ENCODE measurements at regions of chr4 and their contacts with region 1.

Region 1: GRCh38 chr4:7192252-7193029 is at the start of gene SORCS2:
- DNase-seq: peak in 11 of 14 experiments; percentile 8 to 66 (median 34)
- ATAC-seq: peak; percentile 43
- H3K4me3 ChIP-seq: no peak within 1 kb of the TSS
- H3K4me3 Mint-ChIP-seq: peak within 1 kb of the TSS; percentile 62
- H3K27ac ChIP-seq: no peak within 1 kb of the TSS
- H3K27ac Mint-ChIP-seq: no peak within 1 kb of the TSS
- H3K4me1 ChIP-seq: peaks cover 8% of the 10 kb centered on the region
- H3K4me1 Mint-ChIP-seq: no peaks in the 10 kb centered on the region
- H3K27me3 ChIP-seq: peaks cover 32 to 62% of the 10 kb centered on the region in 2 experiments
- H3K27me3 Mint-ChIP-seq: peaks cover 78% of the 10 kb centered on the region
- CTCF ChIP-seq: no peak
- total RNA-seq, gene SORCS2: not detected

Region 2: DNA sequence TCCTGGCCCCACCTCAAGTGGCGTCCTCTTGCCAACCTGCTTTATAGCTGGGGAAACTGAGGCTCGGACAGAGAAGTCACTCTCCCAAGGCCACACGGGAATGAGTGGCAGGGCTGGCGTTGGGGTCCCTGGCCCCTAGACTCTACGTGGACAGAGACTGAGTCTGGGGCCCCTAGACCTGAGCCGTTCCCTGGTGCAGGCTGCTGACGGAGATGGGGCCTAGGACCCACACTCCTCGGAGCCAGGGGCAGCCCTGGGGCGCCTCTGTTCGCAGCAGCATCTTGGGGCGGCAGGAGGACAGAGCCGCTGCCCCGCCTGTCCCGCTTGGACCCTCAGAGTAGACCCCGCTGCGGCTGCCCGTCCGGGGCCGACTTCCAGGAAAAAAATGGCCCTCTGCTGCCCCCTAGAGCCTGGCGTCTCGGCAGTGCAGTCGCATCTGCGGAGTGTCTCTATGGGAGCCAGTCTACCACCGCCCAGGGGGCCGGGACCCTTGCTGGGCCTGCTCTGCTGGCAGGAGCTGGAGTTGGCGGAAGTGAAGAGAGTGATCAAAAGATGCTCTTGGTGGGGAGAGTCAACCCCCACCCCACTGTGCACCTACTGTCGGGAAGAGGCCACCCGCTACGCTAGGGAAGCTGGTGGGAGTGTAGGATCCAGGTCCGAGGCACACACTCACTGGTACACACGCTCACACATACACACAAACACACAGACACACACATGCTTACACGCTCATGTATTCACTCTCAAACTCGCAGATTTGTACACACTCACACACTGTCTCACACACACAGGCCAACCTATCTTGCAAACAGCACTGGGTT is 527.1 kb after region 1 on chr4:
- CTCF ChIA-PET with region 1: no interaction called
- POLR2A ChIA-PET with region 1: no interaction called
- intact Hi-C with region 1: loop called in 1 of 2 experiments (anchors 5 kb)
- DNase-seq: peak; percentile 26 to 73 (median 52)
- ATAC-seq: peak; percentile 51
- H3K4me3 ChIP-seq: no peak overlapping the region
- H3K4me3 Mint-ChIP-seq: no peak overlapping the region
- H3K27ac ChIP-seq: no peak overlapping the region
- H3K27ac Mint-ChIP-seq: no peak overlapping the region
- H3K4me1 ChIP-seq: peaks cover 6% of the 10 kb centered on the region
- H3K4me1 Mint-ChIP-seq: peaks cover 3% of the 10 kb centered on the region
- H3K27me3 ChIP-seq: peaks cover 5 to 11% of the 10 kb centered on the region in 2 experiments
- H3K27me3 Mint-ChIP-seq: peaks cover 27% of the 10 kb centered on the region
- CTCF ChIP-seq: peak; percentile 67

Region 3: GRCh38 chr4:7987148-7987989 is 794.9 kb after region 1 on chr4:
- CTCF ChIA-PET with region 1: no interaction called
- POLR2A ChIA-PET with region 1: no interaction called
- intact Hi-C with region 1: loop called in 1 of 2 experiments (anchors 10 kb)
- DNase-seq: peak; percentile 53 to 87 (median 72)
- ATAC-seq: peak; percentile 85
- H3K4me3 ChIP-seq: no peak overlapping the region
- H3K4me3 Mint-ChIP-seq: no peak overlapping the region
- H3K27ac ChIP-seq: no peak overlapping the region
- H3K27ac Mint-ChIP-seq: no peak overlapping the region
- H3K4me1 ChIP-seq: peaks cover 9% of the 10 kb centered on the region
- H3K4me1 Mint-ChIP-seq: peaks cover 7% of the 10 kb centered on the region
- H3K27me3 ChIP-seq: no peaks in the 10 kb centered on the region
- H3K27me3 Mint-ChIP-seq: no peaks in the 10 kb centered on the region
- CTCF ChIP-seq: peak; percentile 79